ENCODE measurements at regions of chr19 and their contacts with region 1.

Region 1: GRCh38 chr19:12974301-12975220 is 5.2 kb downstream of the DAND5 start:
- DNase-seq: peak; percentile 36 to 67 (median 54)
- ATAC-seq: peak; percentile 86
- H3K4me3 ChIP-seq: no peak overlapping the region
- H3K27ac ChIP-seq: no peak overlapping the region
- H3K4me1 ChIP-seq: peaks cover 9 to 43% of the 10 kb centered on the region in 2 experiments; a peak in 4 of 5 replicates
- H3K27me3 ChIP-seq: no peaks in the 10 kb centered on the region
- CTCF ChIP-seq: no peak
- EP300 ChIP-seq: no peak
- POLR2A ChIP-seq: no peak
- RAD21 ChIP-seq: no peak

Region 2: DNA sequence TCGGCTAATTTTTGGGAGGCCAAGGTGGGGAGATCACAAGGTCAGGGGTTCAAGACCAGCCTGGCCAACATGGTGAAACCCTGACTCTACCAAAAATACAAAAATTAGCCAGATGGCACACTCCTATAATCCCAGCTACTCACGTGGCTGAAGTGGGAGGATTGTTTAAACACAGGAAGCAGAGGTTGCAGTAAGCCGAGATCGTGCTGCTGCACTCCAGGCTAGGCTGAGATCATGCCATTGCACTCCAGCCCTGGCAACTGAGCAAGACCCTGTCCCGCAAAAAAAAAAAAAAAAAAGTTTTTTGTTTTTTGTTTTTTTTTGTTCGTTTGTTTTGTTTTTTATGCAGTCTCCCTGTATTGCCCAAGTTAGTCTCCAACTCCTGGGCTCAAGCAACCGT is 115.0 kb before region 1 on chr19:
- CTCF ChIA-PET with region 1: no interaction called
- POLR2A ChIA-PET with region 1: no interaction called
- in situ Hi-C with region 1: no loop called
- intact Hi-C with region 1: no loop called
- DNase-seq: no peak
- ATAC-seq: no peak
- H3K4me3 ChIP-seq: no peak overlapping the region
- H3K27ac ChIP-seq: no peak overlapping the region
- H3K4me1 ChIP-seq: peaks cover 0 to 5% of the 10 kb centered on the region in 2 experiments; a peak in 1 of 5 replicates
- H3K27me3 ChIP-seq: no peaks in the 10 kb centered on the region
- CTCF ChIP-seq: no peak
- EP300 ChIP-seq: no peak
- POLR2A ChIP-seq: no peak
- RAD21 ChIP-seq: no peak

Region 3: GRCh38 chr19:13060964-13061927 is 86.7 kb after region 1 on chr19:
- CTCF ChIA-PET with region 1: interaction called, 15 read pairs
- POLR2A ChIA-PET with region 1: interaction called, 3 read pairs
- in situ Hi-C with region 1: no loop called
- intact Hi-C with region 1: no loop called
- DNase-seq: peak; percentile 84 to 89 (median 88)
- ATAC-seq: peak; percentile 98
- H3K4me3 ChIP-seq: peak overlapping the region; percentile 12; the same call in 1 of the 2 replicates
- H3K27ac ChIP-seq: no peak overlapping the region
- H3K4me1 ChIP-seq: peaks cover 17 to 62% of the 10 kb centered on the region in 2 experiments; a peak in 4 of 5 replicates
- H3K27me3 ChIP-seq: no peaks in the 10 kb centered on the region
- CTCF ChIP-seq: peak; percentile 92 to 97 (median 95)
- EP300 ChIP-seq: no peak
- POLR2A ChIP-seq: no peak
- RAD21 ChIP-seq: peak; percentile 88 to 91

Region 4: GRCh38 chr19:13093407-13094105 is 119.0 kb after region 1 on chr19:
- CTCF ChIA-PET with region 1: interaction called, 59 read pairs
- POLR2A ChIA-PET with region 1: interaction called, 17 read pairs
- in situ Hi-C with region 1: loop called (anchors 5 kb)
- intact Hi-C with region 1: loop called (anchors 1 kb)
- DNase-seq: peak; percentile 83 to 92 (median 87)
- ATAC-seq: peak; percentile 57
- H3K4me3 ChIP-seq: no peak overlapping the region
- H3K27ac ChIP-seq: peak overlapping the region; percentile 10; the same call in 1 of the 3 replicates
- H3K4me1 ChIP-seq: peaks cover 36 to 84% of the 10 kb centered on the region in 2 experiments
- H3K27me3 ChIP-seq: no peaks in the 10 kb centered on the region
- CTCF ChIP-seq: peak; percentile 94 to 96 (median 95)
- EP300 ChIP-seq: no peak
- POLR2A ChIP-seq: no peak
- RAD21 ChIP-seq: peak; percentile 97 to 98

Region 5: GRCh38 chr19:13262450-13262849 is 287.9 kb after region 1 on chr19:
- CTCF ChIA-PET with region 1: no interaction called
- POLR2A ChIA-PET with region 1: no interaction called
- in situ Hi-C with region 1: no loop called
- intact Hi-C with region 1: loop called (anchors 5 kb)
- DNase-seq: peak; percentile 57 to 73 (median 66)
- ATAC-seq: peak; percentile 88
- H3K4me3 ChIP-seq: no peak overlapping the region
- H3K27ac ChIP-seq: no peak overlapping the region
- H3K4me1 ChIP-seq: peaks cover 3 to 10% of the 10 kb centered on the region in 2 experiments; a peak in 3 of 5 replicates
- H3K27me3 ChIP-seq: peaks cover 22 to 41% of the 10 kb centered on the region in 2 experiments
- CTCF ChIP-seq: peak; percentile 60 to 74 (median 61); a peak in 5 of 6 replicates
- EP300 ChIP-seq: no peak
- POLR2A ChIP-seq: no peak
- RAD21 ChIP-seq: peak; percentile 64 to 76

Region 6: GRCh38 chr19:13430790-13431582 is 456.4 kb after region 1 on chr19:
- CTCF ChIA-PET with region 1: no interaction called
- POLR2A ChIA-PET with region 1: no interaction called
- in situ Hi-C with region 1: loop called (anchors 10 kb)
- intact Hi-C with region 1: no loop called
- DNase-seq: peak; percentile 56 to 76 (median 62)
- ATAC-seq: peak; percentile 92
- H3K4me3 ChIP-seq: no peak overlapping the region
- H3K27ac ChIP-seq: no peak overlapping the region
- H3K4me1 ChIP-seq: no peaks in the 10 kb centered on the region; a peak in 2 of 5 replicates
- H3K27me3 ChIP-seq: peaks cover 0 to 5% of the 10 kb centered on the region in 2 experiments; a peak in 1 of 5 replicates
- CTCF ChIP-seq: peak; percentile 87 to 90 (median 88)
- EP300 ChIP-seq: no peak
- POLR2A ChIP-seq: no peak
- RAD21 ChIP-seq: peak; percentile 44 to 77